ENCODE measurements at regions of chr13 and their contacts with region 1.

Region 1: DNA sequence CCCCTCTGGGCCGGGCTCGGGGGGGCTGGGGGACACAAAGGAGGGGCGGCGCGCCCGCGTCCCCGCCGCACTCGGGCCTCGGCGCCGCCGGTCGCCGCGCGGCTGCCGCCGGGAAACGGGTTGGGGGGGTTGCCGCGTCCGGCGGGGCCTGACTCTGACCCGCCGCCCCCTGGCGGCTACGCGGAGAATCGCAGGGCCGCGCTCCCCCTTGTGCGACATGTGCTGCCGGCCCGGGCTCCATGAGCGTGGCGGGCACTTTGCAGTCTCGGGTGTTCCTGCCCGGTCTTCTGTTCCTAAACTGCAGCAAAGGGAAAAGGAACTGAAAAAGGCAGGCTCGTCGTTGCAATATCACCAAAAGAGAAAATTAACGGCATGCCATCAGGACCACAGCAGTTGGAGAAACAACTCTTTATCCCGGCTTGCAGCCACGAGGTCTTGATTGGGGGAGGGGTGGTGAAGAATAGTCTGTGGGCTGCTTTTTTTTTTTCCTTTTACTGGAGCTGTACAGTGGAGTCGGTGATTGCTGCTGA is 1.5 kb downstream of the MIR17HG start:
- DNase-seq: peak; percentile 83
- H3K4me3 ChIP-seq: peak overlapping the region; percentile 69 to 96 (median 95)
- H3K27ac ChIP-seq: peak overlapping the region; percentile 80
- H3K4me1 ChIP-seq: peaks cover 20% of the 10 kb centered on the region
- H3K27me3 ChIP-seq: peaks cover 5% of the 10 kb centered on the region
- CTCF ChIP-seq: peak; percentile 79 to 86

Region 2: DNA sequence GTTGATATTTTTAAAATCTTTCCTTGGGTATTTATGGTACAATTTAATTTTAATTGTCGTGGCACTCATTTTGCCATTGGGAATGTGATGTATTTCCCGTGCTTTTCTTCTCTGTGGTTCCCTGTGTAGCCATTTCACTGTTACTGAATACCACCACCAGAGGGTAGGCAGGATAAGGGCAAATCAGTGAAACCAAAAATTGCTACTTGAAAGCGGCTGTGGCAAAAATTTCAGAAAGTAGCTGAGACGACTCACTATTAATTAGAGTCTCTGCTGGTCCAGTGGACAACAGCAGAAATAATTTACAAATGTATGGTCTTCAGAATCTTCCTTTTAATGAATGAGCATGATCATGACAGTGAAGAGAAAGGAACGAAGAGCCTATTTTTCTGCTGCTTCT is 35.9 kb before region 1 on chr13:
- CTCF ChIA-PET with region 1: no interaction called
- dilution Hi-C with region 1: no loop called
- in situ Hi-C with region 1: no loop called
- intact Hi-C with region 1: loop called (anchors 2 kb)
- DNase-seq: peak; percentile 1
- H3K4me3 ChIP-seq: no peak overlapping the region
- H3K27ac ChIP-seq: no peak overlapping the region
- H3K4me1 ChIP-seq: no peaks in the 10 kb centered on the region
- H3K27me3 ChIP-seq: no peaks in the 10 kb centered on the region
- CTCF ChIP-seq: peak; percentile 22 to 43

Region 3: DNA sequence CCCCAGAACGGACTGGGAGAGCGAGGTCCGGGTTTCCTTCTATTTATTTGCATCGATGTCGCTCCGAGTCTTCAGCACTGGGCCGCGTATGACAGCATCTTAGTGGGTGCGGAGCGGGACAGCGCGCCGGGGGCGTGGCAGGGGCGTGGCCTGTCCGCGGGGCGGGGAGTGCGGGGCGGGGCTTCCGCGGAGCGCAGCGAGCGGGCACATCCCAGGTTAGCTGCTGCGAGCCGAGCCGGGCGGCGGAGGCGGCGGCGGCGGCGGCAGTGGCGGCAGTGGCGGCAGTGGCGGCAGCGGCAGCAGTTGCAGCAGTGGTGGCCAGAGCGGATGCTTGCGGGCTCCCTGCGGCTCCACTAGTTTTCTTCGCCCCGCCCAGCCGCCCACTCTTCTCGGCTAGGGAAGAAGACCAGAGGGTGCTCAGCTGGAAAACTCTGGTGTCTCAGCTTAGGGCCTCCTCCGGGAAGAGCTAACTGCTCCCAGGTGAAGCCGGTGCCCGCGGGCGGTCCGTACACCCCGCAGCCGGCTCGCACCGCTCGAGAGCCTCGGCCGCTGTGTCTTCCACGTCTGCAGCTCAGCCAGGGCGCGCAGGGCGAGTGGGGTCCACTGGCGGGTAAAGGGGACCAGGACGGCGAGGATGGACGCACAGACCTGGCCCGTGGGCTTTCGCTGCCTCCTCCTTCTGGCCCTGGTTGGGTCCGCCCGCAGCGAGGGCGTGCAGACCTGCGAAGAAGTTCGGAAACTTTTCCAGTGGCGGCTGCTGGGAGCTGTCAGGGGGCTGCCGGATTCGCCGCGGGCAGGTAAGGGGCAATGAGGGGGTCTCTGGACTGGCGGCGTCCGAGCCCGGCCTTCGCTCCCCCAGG is 49.7 kb after region 1 on chr13 and contains the start of gene GPC5:
- CTCF ChIA-PET with region 1: no interaction called
- dilution Hi-C with region 1: no loop called
- in situ Hi-C with region 1: no loop called
- intact Hi-C with region 1: loop called (anchors 5 kb)
- DNase-seq: peak; percentile 64
- H3K4me3 ChIP-seq: peak within 1 kb of the TSS; percentile 51 to 56 (median 52)
- H3K27ac ChIP-seq: no peak within 1 kb of the TSS
- H3K4me1 ChIP-seq: peaks cover 7% of the 10 kb centered on the region
- H3K27me3 ChIP-seq: peaks cover 6% of the 10 kb centered on the region
- CTCF ChIP-seq: no peak
- total RNA-seq, gene GPC5: 1.2 TPM in 1 of 2 donors, not detected in the other

Measured in mammary epithelial cell (primary cell).